Left cardiac atrium (tissue), 4 donors: ENCODE measurements at regions of chr6 and their contacts with region 1.

Region 1: GRCh38 chr6:134340179-134340975 is 22.5 kb upstream of the SGK1 start:
- DNase-seq: no peak
- ATAC-seq: no peak

Region 2: DNA sequence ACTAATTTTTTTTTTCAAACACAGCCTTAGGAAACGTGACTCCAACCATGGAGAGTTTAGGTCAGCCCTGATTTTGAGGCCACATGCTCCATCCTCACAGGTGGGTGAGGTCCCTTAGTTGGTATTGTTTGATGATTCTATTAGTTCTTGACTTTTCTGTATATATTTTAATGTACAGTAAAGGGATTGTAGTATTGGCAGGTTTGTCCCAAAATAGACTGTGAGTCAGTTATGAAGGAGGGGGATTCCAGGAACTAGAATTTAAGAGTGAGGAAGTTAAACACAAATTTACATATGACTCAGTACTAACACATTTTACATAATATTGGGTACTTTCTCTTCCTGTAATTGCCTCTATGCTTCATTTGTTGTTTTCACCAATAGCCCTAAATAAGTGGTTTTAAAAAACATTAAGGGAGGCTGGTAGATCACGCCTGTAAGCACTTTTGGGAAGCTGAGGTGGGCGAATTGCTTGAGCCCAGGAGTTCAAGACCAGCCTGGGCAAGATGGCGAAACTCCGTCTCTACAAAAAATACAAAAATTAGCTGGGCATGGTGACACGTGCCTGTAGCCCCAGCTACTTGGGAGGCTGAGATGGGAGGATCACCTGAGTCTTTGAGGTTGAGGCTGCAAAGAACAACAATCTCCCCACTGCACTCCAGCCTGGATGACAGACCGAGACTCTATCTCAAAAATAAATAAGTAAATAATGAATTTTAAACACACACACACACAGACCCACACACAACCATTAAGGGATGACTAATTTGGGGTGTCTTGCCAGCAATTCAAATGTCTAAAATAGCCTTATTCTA is 104.2 kb before region 1 on chr6:
- intact Hi-C with region 1: loop called in 1 of 2 experiments (anchors 5 kb)
- DNase-seq: no peak
- ATAC-seq: peak; percentile 27 to 62

Region 3: GRCh38 chr6:134446218-134446848 is 106.0 kb after region 1 on chr6:
- intact Hi-C with region 1: no loop called
- DNase-seq: no peak
- ATAC-seq: no peak